ENCODE measurements at regions of chr12 and their contacts with region 1.

Region 1: DNA sequence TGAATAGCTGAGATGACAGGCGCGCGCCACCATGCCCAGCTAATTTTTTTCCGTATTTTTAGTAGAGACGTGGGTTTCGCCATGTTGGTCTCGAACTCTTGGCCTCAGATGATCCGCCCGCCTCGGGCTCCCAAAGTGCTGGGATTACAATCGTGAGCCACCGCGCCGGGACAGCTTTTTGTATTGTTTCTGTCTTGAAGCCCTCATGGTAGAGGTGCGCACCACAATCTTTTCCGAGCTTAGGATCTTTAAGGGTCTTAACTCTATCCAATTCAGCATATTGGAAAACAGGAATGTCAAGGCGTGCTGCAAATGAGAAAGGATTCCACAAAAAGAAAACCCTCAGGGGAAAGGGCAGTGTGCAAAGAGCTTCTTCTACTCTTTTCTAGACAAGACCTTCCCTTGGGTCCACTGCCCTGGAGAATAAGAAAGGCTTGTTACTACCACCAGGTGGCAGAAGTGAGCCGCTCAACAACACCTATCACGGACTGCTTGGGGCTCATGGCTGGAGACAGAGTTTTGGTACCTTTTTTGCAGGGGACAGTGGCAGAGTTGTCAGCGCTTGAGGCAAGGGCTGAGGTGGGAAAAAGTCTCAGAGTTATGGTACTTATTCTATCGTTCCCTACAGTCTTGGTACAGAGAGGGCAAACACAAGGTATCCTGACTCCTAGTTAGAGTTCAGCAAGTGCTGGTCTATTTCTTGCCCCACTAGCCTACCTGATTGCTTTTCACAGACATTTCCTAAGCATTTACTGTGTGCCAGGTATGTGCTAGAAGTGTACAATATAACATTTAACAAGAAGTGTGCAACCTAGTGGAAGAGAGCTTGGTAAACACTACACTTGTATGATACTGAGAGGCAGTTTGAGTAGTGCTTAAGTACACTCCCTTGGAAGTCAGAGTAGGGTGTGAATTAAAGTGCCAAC is 16.4 kb upstream of the SP7 start:
- DNase-seq: peak; percentile 91
- ATAC-seq: peak; percentile 100
- H3K4me3 ChIP-seq: no peak overlapping the region
- H3K4me3 Mint-ChIP-seq: no peak overlapping the region
- H3K27ac ChIP-seq: no peak overlapping the region
- H3K27ac Mint-ChIP-seq: peak overlapping the region; percentile 61
- H3K4me1 ChIP-seq: peaks cover 4 to 5% of the 10 kb centered on the region in 2 donors
- H3K4me1 Mint-ChIP-seq: peaks cover 6% of the 10 kb centered on the region
- H3K27me3 ChIP-seq: no peaks in the 10 kb centered on the region
- H3K27me3 Mint-ChIP-seq: no peaks in the 10 kb centered on the region
- CTCF ChIP-seq: peak; percentile 87

Region 2: DNA sequence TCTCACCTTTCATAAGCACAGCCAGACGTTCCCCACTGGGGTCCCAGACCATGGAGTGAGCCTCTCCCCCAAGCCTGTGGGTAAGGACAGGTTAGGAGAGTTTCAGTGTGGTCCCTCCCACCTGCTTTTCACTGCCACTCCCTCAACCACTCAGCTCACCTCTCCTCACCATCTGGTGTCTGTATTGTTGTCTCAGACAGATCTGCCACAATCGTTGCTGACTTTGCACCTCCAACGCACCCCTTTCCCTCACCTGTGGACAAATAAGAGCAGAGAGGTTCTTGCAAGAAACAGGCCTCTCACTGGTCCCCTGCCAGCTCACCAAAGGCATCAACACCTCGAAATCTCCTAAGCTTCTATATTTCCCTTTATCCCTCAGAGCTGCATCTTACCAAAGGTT is 44.3 kb before region 1 on chr12:
- CTCF ChIA-PET with region 1: no interaction called
- POLR2A ChIA-PET with region 1: no interaction called
- intact Hi-C with region 1: no loop called
- DNase-seq: no peak
- ATAC-seq: no peak
- H3K4me3 ChIP-seq: no peak overlapping the region
- H3K4me3 Mint-ChIP-seq: no peak overlapping the region
- H3K27ac ChIP-seq: no peak overlapping the region
- H3K27ac Mint-ChIP-seq: no peak overlapping the region
- H3K4me1 ChIP-seq: no peaks in the 10 kb centered on the region
- H3K4me1 Mint-ChIP-seq: peaks cover 1% of the 10 kb centered on the region
- H3K27me3 ChIP-seq: no peaks in the 10 kb centered on the region
- H3K27me3 Mint-ChIP-seq: no peaks in the 10 kb centered on the region
- CTCF ChIP-seq: no peak

Region 3: DNA sequence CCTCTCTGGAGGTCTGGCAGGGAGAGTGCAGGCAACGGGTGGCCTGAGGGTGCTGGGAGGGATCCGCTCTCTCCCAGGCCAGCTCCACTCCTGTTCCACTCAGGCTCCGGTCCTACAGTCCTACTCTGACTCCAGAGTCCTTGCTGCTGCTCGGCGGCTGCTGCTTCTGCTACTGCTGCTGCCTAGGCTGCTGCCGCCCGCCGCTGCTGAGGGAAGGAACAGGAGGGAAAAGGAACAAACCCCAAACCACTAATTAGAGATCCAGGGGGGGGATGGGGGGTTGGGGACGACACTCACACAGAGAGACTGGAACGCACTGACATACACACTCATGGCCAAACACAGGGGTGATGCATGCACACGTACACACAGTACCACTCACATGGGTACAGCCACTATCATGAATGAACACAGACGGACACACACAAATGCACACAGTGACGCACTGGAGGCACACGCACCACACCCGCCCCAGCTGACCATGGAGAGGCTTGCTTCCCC is 16.4 kb before region 1 on chr12 and contains the start of gene SP7:
- CTCF ChIA-PET with region 1: interaction called, 353 read pairs
- POLR2A ChIA-PET with region 1: no interaction called
- intact Hi-C with region 1: no loop called
- DNase-seq: peak; percentile 67
- ATAC-seq: peak; percentile 79
- H3K4me3 ChIP-seq: no peak within 1 kb of the TSS
- H3K4me3 Mint-ChIP-seq: no peak within 1 kb of the TSS
- H3K27ac ChIP-seq: no peak within 1 kb of the TSS
- H3K27ac Mint-ChIP-seq: peak within 1 kb of the TSS; percentile 23
- H3K4me1 ChIP-seq: peaks cover 10 to 13% of the 10 kb centered on the region in 2 donors
- H3K4me1 Mint-ChIP-seq: peaks cover 10% of the 10 kb centered on the region
- H3K27me3 ChIP-seq: peaks cover 0 to 49% (median 25%) of the 10 kb centered on the region in 4 experiments
- H3K27me3 Mint-ChIP-seq: peaks cover 67% of the 10 kb centered on the region
- CTCF ChIP-seq: no peak
- total RNA-seq, gene SP7: not detected in 2 replicates

Region 4: GRCh38 chr12:53379389-53380103 is 27.0 kb after region 1 on chr12:
- CTCF ChIA-PET with region 1: interaction called, 132 read pairs
- POLR2A ChIA-PET with region 1: interaction called, 6 read pairs
- intact Hi-C with region 1: loop called (anchors 1 kb)
- DNase-seq: peak; percentile 99
- ATAC-seq: peak; percentile 70
- H3K4me3 ChIP-seq: peak overlapping the region; percentile 60 to 93 (median 64)
- H3K4me3 Mint-ChIP-seq: no peak overlapping the region
- H3K27ac ChIP-seq: peak overlapping the region; percentile 76 to 89
- H3K27ac Mint-ChIP-seq: no peak overlapping the region
- H3K4me1 ChIP-seq: peaks cover 39 to 46% of the 10 kb centered on the region in 2 donors
- H3K4me1 Mint-ChIP-seq: peaks cover 33% of the 10 kb centered on the region
- H3K27me3 ChIP-seq: no peaks in the 10 kb centered on the region
- H3K27me3 Mint-ChIP-seq: no peaks in the 10 kb centered on the region
- CTCF ChIP-seq: no peak

Region 5: DNA sequence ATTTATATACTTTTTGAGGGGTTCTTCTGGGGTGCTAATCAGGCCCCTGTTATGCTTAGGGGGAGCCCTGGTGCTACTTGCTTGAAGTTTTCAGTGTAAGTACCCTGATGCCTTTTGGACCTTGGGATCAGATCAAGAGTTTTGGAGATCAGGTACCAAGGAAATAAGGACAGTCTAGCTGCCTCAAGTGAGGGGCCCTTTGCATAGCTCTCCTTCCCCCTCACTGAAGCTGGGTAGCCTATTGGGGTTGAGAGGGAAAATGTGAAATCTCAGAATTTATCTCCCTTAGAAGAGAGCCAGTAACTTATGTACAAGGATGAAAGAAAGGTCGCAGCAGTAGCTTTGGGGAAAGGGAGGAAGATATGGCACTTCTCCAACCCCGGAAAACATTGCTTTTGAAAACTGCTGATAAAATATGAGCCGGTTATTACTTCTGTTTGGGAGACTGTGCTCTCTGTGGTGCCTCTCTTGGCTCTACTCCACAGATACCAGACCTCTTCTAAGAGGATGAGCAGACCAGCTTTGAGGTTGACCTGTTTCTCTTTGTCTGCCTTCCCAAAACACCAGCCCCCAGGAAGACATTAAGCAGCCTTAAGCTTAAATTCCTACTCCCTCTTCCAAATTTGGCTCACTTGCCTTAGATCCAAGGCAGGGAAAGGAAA is 62.3 kb after region 1 on chr12:
- CTCF ChIA-PET with region 1: interaction called, 384 read pairs
- POLR2A ChIA-PET with region 1: interaction called, 10 read pairs
- intact Hi-C with region 1: loop called (anchors 1 kb)
- DNase-seq: no peak
- ATAC-seq: no peak
- H3K4me3 ChIP-seq: no peak overlapping the region
- H3K4me3 Mint-ChIP-seq: no peak overlapping the region
- H3K27ac ChIP-seq: no peak overlapping the region
- H3K27ac Mint-ChIP-seq: peak overlapping the region; percentile 46
- H3K4me1 ChIP-seq: peaks cover 24 to 29% of the 10 kb centered on the region in 2 donors
- H3K4me1 Mint-ChIP-seq: peaks cover 57% of the 10 kb centered on the region
- H3K27me3 ChIP-seq: no peaks in the 10 kb centered on the region
- H3K27me3 Mint-ChIP-seq: no peaks in the 10 kb centered on the region
- CTCF ChIP-seq: no peak

Region 6: DNA sequence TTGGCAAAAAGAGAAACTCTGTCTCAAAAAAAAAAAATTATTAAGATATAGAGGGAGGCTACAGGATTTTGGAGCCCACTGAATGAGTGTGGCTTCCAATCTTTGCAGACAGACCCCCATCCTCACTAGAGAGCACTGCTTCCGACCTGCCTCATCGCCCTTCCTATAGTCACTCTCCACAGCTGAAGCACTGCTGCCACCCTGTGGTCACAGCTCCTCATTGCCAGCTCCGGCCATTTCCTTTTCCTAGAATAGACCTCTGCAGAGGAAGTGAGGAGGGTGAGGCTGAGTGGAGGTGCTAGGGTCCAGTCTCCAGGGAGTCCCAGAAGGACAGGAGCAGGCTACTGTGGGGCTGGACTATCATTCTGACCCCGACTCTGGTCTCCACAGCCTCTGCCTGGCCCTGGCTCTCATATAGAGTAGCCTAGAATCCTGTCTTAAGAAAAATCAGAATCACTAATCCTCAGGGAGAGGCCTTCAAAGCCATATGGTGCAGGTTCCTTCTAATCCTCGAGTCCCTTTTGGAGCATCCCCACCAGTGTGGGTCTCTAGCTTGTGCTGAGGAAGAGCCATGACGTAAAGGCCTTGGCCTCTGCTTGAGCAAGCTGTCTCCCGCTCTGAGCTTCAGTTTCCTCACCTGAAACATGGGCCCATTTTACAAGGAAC is 156.1 kb after region 1 on chr12:
- CTCF ChIA-PET with region 1: interaction called, 63 read pairs
- POLR2A ChIA-PET with region 1: interaction called, 4 read pairs
- intact Hi-C with region 1: loop called (anchors 1 kb)
- DNase-seq: peak; percentile 87
- ATAC-seq: peak; percentile 100
- H3K4me3 ChIP-seq: no peak overlapping the region
- H3K4me3 Mint-ChIP-seq: no peak overlapping the region
- H3K27ac ChIP-seq: peak overlapping the region; percentile 30 to 31
- H3K27ac Mint-ChIP-seq: peak overlapping the region; percentile 64
- H3K4me1 ChIP-seq: peaks cover 6 to 8% of the 10 kb centered on the region in 2 donors
- H3K4me1 Mint-ChIP-seq: peaks cover 10% of the 10 kb centered on the region
- H3K27me3 ChIP-seq: no peaks in the 10 kb centered on the region
- H3K27me3 Mint-ChIP-seq: no peaks in the 10 kb centered on the region
- CTCF ChIP-seq: peak; percentile 95